Transverse colon (tissue), 4 donors: ENCODE measurements at regions of chr20 and their contacts with region 1.

Region 1: GRCh38 chr20:41738604-41739206 is 120.5 kb upstream of the CHD6 start:
- DNase-seq: peak; percentile 35
- H3K4me3 ChIP-seq: no peak overlapping the region
- H3K27ac ChIP-seq: no peak overlapping the region
- H3K4me1 ChIP-seq: no peaks in the 10 kb centered on the region
- H3K27me3 ChIP-seq: no peaks in the 10 kb centered on the region
- CTCF ChIP-seq: peak; percentile 48 to 78 (median 73)
- EP300 ChIP-seq: no peak
- POLR2A ChIP-seq: no peak

Region 2: DNA sequence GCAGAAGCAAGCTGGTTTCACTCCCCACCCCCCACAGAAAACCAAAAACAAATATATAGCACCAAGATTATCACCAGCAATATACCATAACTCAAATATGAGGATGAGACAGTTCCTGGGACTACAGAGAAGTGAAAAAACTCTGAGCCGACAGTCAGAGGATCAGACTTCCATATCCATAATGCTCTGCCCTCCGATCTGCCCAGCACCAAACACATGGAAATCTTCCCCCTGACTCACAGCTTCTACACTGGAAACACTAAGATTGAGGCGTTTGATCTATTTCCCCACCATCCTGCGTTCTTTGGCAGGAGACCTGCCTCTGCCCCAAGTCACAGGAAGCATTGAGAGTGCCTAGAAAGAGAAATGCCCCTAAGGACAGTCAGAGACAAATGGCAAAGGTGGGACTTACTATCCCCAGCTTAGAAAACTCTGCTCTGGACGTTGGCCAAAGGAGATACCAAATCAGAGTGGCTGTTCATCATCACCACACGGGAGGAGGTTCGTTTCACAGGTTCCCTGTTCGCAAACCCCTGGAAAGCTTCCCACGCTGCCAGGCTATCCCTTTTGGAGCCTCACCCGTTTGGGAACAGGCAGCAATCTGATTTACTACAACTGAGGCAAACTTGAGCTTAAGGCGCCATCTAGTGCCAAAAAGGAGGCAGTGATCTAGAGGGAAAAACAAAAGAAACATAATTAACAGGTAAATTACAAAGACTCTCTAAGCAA is 1670.3 kb after region 1 on chr20:
- in situ Hi-C with region 1: loop called in 2 of 4 experiments (anchors 25 kb)
- intact Hi-C with region 1: no loop called
- DNase-seq: no peak
- H3K4me3 ChIP-seq: no peak overlapping the region
- H3K27ac ChIP-seq: no peak overlapping the region
- H3K4me1 ChIP-seq: no peaks in the 10 kb centered on the region
- H3K27me3 ChIP-seq: peaks cover 25% of the 10 kb centered on the region
- CTCF ChIP-seq: peak in 4 of 5 experiments; percentile 32 to 48 (median 39)
- EP300 ChIP-seq: no peak
- POLR2A ChIP-seq: no peak